ENCODE measurements at regions of chr13 and their contacts with region 1.

Region 1: DNA sequence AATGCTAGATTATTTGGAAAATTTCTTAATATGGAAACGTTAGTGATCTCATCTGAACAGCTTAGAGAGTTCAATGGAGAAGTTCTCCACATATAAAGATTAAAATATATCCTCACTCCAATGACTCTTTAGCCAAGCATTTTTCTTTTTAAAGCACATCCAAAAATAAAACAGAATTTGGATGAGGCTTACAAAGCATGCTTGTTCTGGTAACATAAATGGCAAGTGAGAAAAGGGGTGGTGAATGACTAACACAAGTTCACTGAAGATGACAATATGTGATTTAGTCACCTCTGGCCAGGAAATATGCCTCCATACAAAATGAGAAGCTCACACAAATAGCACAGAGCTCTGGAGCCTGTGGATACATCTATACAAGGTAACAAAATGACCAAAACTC is 253.0 kb downstream of the PCDH20 start:
- DNase-seq: no peak
- ATAC-seq: no peak
- H3K4me3 ChIP-seq: no peak overlapping the region
- H3K4me3 Mint-ChIP-seq: no peak overlapping the region
- H3K27ac ChIP-seq: no peak overlapping the region
- H3K27ac Mint-ChIP-seq: no peak overlapping the region
- H3K4me1 ChIP-seq: no peaks in the 10 kb centered on the region
- H3K4me1 Mint-ChIP-seq: no peaks in the 10 kb centered on the region
- H3K27me3 ChIP-seq: no peaks in the 10 kb centered on the region
- H3K27me3 Mint-ChIP-seq: no peaks in the 10 kb centered on the region

Region 2: GRCh38 chr13:61192826-61193225 is 30.2 kb after region 1 on chr13:
- CTCF ChIA-PET with region 1: no interaction called
- POLR2A ChIA-PET with region 1: interaction called in 1 of 2 experiments, 10 read pairs
- DNase-seq: no peak
- ATAC-seq: no peak
- H3K4me3 ChIP-seq: no peak overlapping the region
- H3K4me3 Mint-ChIP-seq: no peak overlapping the region
- H3K27ac ChIP-seq: no peak overlapping the region
- H3K27ac Mint-ChIP-seq: no peak overlapping the region
- H3K4me1 ChIP-seq: no peaks in the 10 kb centered on the region
- H3K4me1 Mint-ChIP-seq: no peaks in the 10 kb centered on the region
- H3K27me3 ChIP-seq: no peaks in the 10 kb centered on the region
- H3K27me3 Mint-ChIP-seq: no peaks in the 10 kb centered on the region

Measured in T-cell (primary cell).